ENCODE measurements at regions of chr5 and their contacts with region 1.

Region 1: GRCh38 chr5:169923988-169924387 is 56.3 kb downstream of the INSYN2B start:
- DNase-seq: peak; percentile 20
- CTCF ChIP-seq: no peak

Region 2: GRCh38 chr5:169873642-169874041 is 50.3 kb before region 1 on chr5:
- CTCF ChIA-PET with region 1: no interaction called
- POLR2A ChIA-PET with region 1: no interaction called
- DNase-seq: no peak
- CTCF ChIP-seq: no peak

Region 3: DNA sequence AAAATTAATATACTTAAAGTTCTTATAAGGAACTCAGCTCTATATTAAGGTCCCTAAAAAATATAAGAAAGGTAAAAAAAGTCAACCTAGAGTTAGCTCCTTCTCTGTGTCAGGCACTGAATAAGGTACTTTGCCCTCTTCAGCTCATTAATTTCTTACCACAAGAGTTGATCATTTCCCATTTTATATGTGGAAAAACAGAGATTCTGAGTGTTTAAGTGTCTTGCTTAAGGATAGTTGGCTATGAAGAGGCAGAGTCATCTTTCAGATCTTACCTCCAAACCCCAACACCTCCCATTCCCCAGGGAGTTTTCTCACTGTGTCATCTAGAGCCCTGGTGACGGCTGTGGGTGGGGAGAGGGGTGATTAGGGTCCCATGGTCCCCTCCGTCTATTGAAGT is 15.7 kb after region 1 on chr5:
- CTCF ChIA-PET with region 1: interaction called, 10 read pairs
- POLR2A ChIA-PET with region 1: no interaction called
- DNase-seq: no peak
- CTCF ChIP-seq: no peak

Measured in GM10248 (cell line).